ENCODE measurements at regions of chr5 and their contacts with region 1.

Region 1: GRCh38 chr5:180291943-180292831 is at the start of gene MAPK9:
- DNase-seq: peak; percentile 86
- H3K4me3 Mint-ChIP-seq: peak within 1 kb of the TSS; percentile 95
- H3K27ac Mint-ChIP-seq: peak within 1 kb of the TSS; percentile 99
- H3K4me1 Mint-ChIP-seq: peaks cover 42% of the 10 kb centered on the region
- H3K27me3 Mint-ChIP-seq: no peaks in the 10 kb centered on the region

Region 2: GRCh38 chr5:180315762-180316212 is 23.6 kb after region 1 on chr5:
- CTCF ChIA-PET with region 1: interaction called, 88 read pairs
- DNase-seq: peak; percentile 80
- H3K4me3 Mint-ChIP-seq: no peak overlapping the region
- H3K27ac Mint-ChIP-seq: no peak overlapping the region
- H3K4me1 Mint-ChIP-seq: peaks cover 15% of the 10 kb centered on the region
- H3K27me3 Mint-ChIP-seq: peaks cover 5% of the 10 kb centered on the region

Region 3: DNA sequence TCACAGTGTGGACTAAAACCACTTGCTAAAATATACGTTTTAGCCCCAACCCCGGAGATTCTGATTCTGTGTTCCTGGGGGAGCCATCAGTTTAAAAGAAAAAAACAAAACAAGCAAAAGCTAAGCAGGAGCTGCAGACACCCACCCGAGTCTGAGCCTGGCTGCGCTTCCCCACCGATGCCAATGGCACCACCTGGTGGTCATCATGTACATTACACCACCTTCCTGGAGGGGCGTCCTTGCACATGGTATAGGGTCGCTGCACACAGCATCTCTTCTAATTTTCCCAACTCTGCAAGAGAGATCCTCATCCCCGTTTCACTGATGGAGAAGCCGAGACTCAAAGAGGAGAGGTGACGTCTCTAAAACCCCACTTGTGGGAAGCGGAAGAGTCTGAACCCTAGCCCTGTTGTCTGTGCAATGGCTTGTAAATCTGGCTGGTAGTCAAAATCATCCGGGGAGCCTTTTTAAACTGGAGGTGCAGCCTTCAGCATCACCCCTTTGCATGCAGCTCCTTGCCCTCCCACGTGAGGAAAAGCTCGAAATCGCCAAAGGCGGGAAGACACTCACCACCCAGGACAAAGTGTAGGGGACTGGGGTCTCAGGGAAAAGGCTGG is 178.9 kb after region 1 on chr5:
- CTCF ChIA-PET with region 1: interaction called, 21 read pairs
- DNase-seq: peak; percentile 65
- H3K4me3 Mint-ChIP-seq: no peak overlapping the region
- H3K27ac Mint-ChIP-seq: no peak overlapping the region
- H3K4me1 Mint-ChIP-seq: no peaks in the 10 kb centered on the region
- H3K27me3 Mint-ChIP-seq: peaks cover 25% of the 10 kb centered on the region